ENCODE measurements at regions of chr2 and their contacts with region 1.

Region 1: DNA sequence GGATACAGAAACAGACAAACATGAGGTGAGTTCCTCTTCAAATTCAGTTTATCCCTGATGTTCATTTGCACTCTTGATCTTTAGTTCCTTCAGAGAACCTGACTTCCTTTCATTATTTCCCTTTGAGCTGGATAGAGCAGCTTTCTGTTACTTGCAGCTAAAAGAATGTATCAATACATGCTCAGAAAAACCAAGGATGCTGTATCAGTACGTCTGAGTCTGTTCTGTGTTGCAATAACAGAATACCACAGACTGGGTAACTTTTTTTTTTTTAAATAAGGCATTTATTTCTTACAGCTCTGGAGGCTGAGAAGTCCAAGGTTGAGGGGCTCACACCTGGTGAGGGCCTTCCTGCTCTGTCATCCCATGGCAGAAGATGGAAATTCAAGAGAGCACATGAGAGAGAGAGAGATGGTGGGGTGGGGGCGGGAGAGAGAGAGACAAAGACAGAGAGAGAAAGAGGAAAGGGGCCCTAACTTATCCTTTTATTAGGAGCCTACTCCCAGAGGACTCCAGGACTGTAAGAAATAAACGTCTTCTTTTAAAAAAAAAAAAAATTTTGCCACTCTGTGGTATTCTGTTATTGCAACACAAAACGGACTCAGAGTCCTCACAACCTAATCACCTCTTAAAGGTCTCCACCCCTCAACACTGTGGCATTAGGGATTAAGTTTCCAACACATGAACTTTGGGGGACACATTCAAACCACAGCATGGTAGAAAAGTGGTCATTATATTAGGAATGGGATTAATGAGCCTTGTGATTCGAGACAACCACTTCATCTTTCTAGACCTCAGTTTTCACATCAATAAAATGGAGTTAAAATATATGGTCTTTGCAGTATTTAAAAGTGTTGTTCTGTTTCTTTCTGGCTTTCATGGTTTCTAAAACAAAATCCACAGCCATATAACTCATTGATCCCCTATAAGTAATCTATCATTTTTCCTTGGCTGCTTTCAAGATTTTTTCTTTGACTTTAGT is 18.4 kb upstream of the SELENOI start:
- DNase-seq: no peak
- ATAC-seq: no peak
- H3K4me3 ChIP-seq: no peak overlapping the region
- H3K4me3 Mint-ChIP-seq: no peak overlapping the region
- H3K27ac ChIP-seq: no peak overlapping the region
- H3K27ac Mint-ChIP-seq: no peak overlapping the region
- H3K4me1 ChIP-seq: peaks cover 0 to 6% of the 10 kb centered on the region in 2 experiments
- H3K4me1 Mint-ChIP-seq: peaks cover 6 to 10% (median 8%) of the 10 kb centered on the region in 3 donors
- H3K27me3 ChIP-seq: no peaks in the 10 kb centered on the region
- H3K27me3 Mint-ChIP-seq: no peaks in the 10 kb centered on the region

Region 2: GRCh38 chr2:26255759-26256384 is 71.7 kb before region 1 on chr2:
- CTCF ChIA-PET with region 1: no interaction called
- POLR2A ChIA-PET with region 1: interaction called in 1 of 2 experiments, 12 read pairs
- DNase-seq: no peak
- ATAC-seq: no peak
- H3K4me3 ChIP-seq: no peak overlapping the region
- H3K4me3 Mint-ChIP-seq: no peak overlapping the region
- H3K27ac ChIP-seq: no peak overlapping the region
- H3K27ac Mint-ChIP-seq: no peak overlapping the region
- H3K4me1 ChIP-seq: no peaks in the 10 kb centered on the region
- H3K4me1 Mint-ChIP-seq: peaks cover 22 to 27% (median 23%) of the 10 kb centered on the region in 3 donors
- H3K27me3 ChIP-seq: no peaks in the 10 kb centered on the region
- H3K27me3 Mint-ChIP-seq: no peaks in the 10 kb centered on the region

Region 3: GRCh38 chr2:26268184-26268583 is 59.4 kb before region 1 on chr2:
- CTCF ChIA-PET with region 1: no interaction called
- POLR2A ChIA-PET with region 1: no interaction called
- DNase-seq: no peak
- ATAC-seq: no peak
- H3K4me3 ChIP-seq: no peak overlapping the region
- H3K4me3 Mint-ChIP-seq: no peak overlapping the region
- H3K27ac ChIP-seq: no peak overlapping the region
- H3K27ac Mint-ChIP-seq: no peak overlapping the region
- H3K4me1 ChIP-seq: no peaks in the 10 kb centered on the region
- H3K4me1 Mint-ChIP-seq: peaks cover 0 to 3% (median 0%) of the 10 kb centered on the region in 3 donors
- H3K27me3 ChIP-seq: no peaks in the 10 kb centered on the region
- H3K27me3 Mint-ChIP-seq: no peaks in the 10 kb centered on the region